Esophagus squamous epithelium (tissue), 5 donors: ENCODE measurements at regions of chr12 and their contacts with region 1.

Region 1: GRCh38 chr12:43882578-43883178 is 46.8 kb downstream of the TMEM117 start:
- DNase-seq: no peak
- H3K4me3 ChIP-seq: no peak overlapping the region
- H3K27ac ChIP-seq: no peak overlapping the region
- H3K4me1 ChIP-seq: peaks cover 0 to 12% (median 0%) of the 10 kb centered on the region in 3 donors
- H3K27me3 ChIP-seq: no peaks in the 10 kb centered on the region
- CTCF ChIP-seq: peak; percentile 42 to 88 (median 79)
- POLR2A ChIP-seq: no peak

Region 2: GRCh38 chr12:43776498-43776897 is 106.2 kb before region 1 on chr12:
- intact Hi-C with region 1: loop called (anchors 10 kb)
- DNase-seq: no peak
- H3K4me3 ChIP-seq: no peak overlapping the region
- H3K27ac ChIP-seq: no peak overlapping the region
- H3K4me1 ChIP-seq: no peaks in the 10 kb centered on the region
- H3K27me3 ChIP-seq: no peaks in the 10 kb centered on the region
- CTCF ChIP-seq: peak in 5 of 6 experiments; percentile 20 to 56 (median 31)
- POLR2A ChIP-seq: no peak

Region 3: GRCh38 chr12:44738051-44738450 is 855.4 kb after region 1 on chr12:
- intact Hi-C with region 1: no loop called
- DNase-seq: no peak
- H3K4me3 ChIP-seq: no peak overlapping the region
- H3K27ac ChIP-seq: no peak overlapping the region
- H3K4me1 ChIP-seq: no peaks in the 10 kb centered on the region
- H3K27me3 ChIP-seq: no peaks in the 10 kb centered on the region
- CTCF ChIP-seq: no peak
- POLR2A ChIP-seq: no peak